ENCODE measurements at regions of chr4 and their contacts with region 1.

Region 1: DNA sequence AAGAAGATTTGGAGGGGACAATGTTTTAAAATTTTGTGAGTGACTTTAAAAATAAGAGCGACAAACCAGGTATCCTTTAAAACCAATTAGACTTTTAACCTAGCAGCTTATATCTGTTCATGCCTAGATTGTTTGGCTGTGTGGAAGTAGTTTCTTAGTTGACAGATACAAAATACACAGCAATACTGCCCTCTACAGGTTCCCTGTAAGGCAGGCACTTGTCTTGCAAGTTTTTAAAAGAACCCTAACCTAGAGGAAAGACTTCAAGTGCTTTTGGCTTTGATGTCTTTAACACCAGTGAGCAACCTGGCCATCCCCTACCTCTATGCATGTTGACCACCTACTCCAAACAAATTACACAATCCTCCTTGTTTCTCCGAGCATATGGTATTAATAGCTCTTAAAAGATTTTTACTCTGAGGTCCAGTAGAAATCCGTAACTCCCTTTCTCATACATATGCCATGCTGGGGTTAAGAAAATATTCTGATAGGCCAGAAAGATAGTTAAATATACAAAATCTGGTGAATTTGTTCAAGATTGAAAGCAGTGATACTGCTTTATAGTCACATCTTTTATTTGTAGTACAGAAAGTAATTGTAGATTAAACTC is 273.0 kb downstream of the ARHGAP24 start:
- DNase-seq: peak; percentile 83
- ATAC-seq: peak; percentile 83
- H3K4me3 ChIP-seq: no peak overlapping the region
- H3K27ac ChIP-seq: no peak overlapping the region
- H3K4me1 ChIP-seq: no peaks in the 10 kb centered on the region
- H3K27me3 ChIP-seq: no peaks in the 10 kb centered on the region
- CTCF ChIP-seq: peak; percentile 89
- POLR2A ChIP-seq: no peak
- RAD21 ChIP-seq: peak; percentile 81

Region 2: GRCh38 chr4:85084380-85085094 is 663.5 kb before region 1 on chr4:
- CTCF ChIA-PET with region 1: interaction called, 8 read pairs
- POLR2A ChIA-PET with region 1: no interaction called
- dilution Hi-C with region 1: no loop called
- in situ Hi-C with region 1: no loop called
- intact Hi-C with region 1: loop called (anchors 1 kb)
- DNase-seq: peak; percentile 75
- ATAC-seq: peak; percentile 80
- H3K4me3 ChIP-seq: no peak overlapping the region
- H3K27ac ChIP-seq: no peak overlapping the region
- H3K4me1 ChIP-seq: no peaks in the 10 kb centered on the region
- H3K27me3 ChIP-seq: no peaks in the 10 kb centered on the region
- CTCF ChIP-seq: peak; percentile 70
- POLR2A ChIP-seq: no peak
- RAD21 ChIP-seq: peak; percentile 50

Region 3: DNA sequence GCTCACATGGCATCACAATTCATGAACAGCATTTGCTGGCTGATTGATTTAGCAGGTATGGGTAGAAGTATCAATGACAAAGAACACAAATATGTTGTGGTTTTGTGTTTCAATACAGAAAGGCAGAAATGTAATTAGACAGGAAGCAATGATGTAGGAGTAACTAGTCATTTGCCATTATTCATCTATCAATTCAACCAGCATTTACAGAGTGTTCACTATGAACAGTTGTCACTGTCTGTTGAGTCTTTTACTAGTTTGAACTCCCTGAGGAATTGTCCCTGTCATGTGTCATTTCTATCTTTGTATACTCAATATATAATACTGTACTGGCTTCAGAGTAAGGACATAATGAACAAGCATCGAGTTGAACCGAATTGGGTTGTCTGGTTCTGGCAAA is 324.6 kb before region 1 on chr4:
- CTCF ChIA-PET with region 1: no interaction called
- POLR2A ChIA-PET with region 1: no interaction called
- dilution Hi-C with region 1: no loop called
- in situ Hi-C with region 1: no loop called
- intact Hi-C with region 1: loop called (anchors 1 kb)
- DNase-seq: no peak
- ATAC-seq: no peak
- H3K4me3 ChIP-seq: no peak overlapping the region
- H3K27ac ChIP-seq: no peak overlapping the region
- H3K4me1 ChIP-seq: no peaks in the 10 kb centered on the region
- H3K27me3 ChIP-seq: no peaks in the 10 kb centered on the region
- CTCF ChIP-seq: no peak
- POLR2A ChIP-seq: no peak
- RAD21 ChIP-seq: no peak

Region 4: GRCh38 chr4:85725721-85726170 is 22.2 kb before region 1 on chr4:
- CTCF ChIA-PET with region 1: no interaction called
- POLR2A ChIA-PET with region 1: no interaction called
- dilution Hi-C with region 1: no loop called
- in situ Hi-C with region 1: no loop called
- intact Hi-C with region 1: no loop called
- DNase-seq: no peak
- ATAC-seq: no peak
- H3K4me3 ChIP-seq: no peak overlapping the region
- H3K27ac ChIP-seq: no peak overlapping the region
- H3K4me1 ChIP-seq: no peaks in the 10 kb centered on the region
- H3K27me3 ChIP-seq: no peaks in the 10 kb centered on the region; the same call in 1 of the 2 replicates
- CTCF ChIP-seq: no peak
- POLR2A ChIP-seq: no peak
- RAD21 ChIP-seq: no peak